ENCODE measurements at regions of chr11 and their contacts with region 1.

Region 1: GRCh38 chr11:64269380-64270234 is 14.9 kb downstream of the BAD start:
- DNase-seq: peak; percentile 100
- ATAC-seq: peak; percentile 85
- H3K4me3 ChIP-seq: peak overlapping the region; percentile 56
- H3K27ac ChIP-seq: peak overlapping the region; percentile 86
- H3K4me1 ChIP-seq: peaks cover 11% of the 10 kb centered on the region
- H3K27me3 ChIP-seq: no peaks in the 10 kb centered on the region
- CTCF ChIP-seq: peak; percentile 17; the same call in 1 of the 2 replicates
- POLR2A ChIP-seq: peak; percentile 73
- RAD21 ChIP-seq: no peak; the same call in 1 of the 2 replicates

Region 2: DNA sequence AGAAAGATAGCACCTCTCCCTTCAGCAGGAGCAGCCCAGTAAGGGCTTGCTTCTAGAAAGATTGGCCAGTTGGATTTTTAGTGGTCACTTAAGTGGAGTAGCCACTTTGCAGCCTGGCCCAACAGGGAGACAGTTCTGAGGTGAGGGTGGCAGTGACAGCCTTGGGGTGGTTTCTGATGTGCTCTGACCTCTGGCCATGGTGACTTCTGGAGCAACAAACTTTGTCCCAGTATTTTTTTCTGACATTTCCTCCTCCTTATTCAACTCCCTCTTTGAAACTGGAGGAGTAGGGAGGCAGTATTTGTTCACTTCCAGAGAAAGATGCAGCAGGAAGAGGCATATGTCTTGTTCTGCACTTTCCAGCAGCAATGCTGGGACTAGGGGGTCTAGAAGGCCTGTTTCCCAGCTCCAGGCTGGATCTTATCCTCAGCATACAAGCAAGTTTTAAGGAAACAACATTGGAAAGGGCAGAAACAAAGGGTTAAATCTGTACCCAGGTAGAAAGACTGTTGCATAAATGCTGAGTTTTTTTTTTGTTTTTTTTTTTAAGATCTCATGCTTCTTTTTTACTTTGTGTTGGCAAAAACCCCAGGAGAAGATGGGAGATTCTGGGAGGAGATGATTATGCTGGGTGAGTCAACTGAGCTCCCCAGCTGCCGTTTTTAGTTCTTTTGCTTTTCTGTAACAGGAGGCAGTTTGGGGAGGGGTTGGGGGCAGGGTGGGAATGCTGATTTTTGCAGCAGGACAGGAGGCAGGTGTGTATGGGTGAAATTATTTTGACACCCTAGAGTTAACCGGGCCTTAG is 389.8 kb before region 1 on chr11:
- CTCF ChIA-PET with region 1: no interaction called
- POLR2A ChIA-PET with region 1: interaction called, 10 read pairs
- dilution Hi-C with region 1: no loop called
- in situ Hi-C with region 1: no loop called
- intact Hi-C with region 1: no loop called
- DNase-seq: peak; percentile 82
- ATAC-seq: peak; percentile 83
- H3K4me3 ChIP-seq: no peak overlapping the region
- H3K27ac ChIP-seq: no peak overlapping the region
- H3K4me1 ChIP-seq: peaks cover 17% of the 10 kb centered on the region
- H3K27me3 ChIP-seq: no peaks in the 10 kb centered on the region
- CTCF ChIP-seq: no peak
- POLR2A ChIP-seq: no peak
- RAD21 ChIP-seq: no peak

Region 3: DNA sequence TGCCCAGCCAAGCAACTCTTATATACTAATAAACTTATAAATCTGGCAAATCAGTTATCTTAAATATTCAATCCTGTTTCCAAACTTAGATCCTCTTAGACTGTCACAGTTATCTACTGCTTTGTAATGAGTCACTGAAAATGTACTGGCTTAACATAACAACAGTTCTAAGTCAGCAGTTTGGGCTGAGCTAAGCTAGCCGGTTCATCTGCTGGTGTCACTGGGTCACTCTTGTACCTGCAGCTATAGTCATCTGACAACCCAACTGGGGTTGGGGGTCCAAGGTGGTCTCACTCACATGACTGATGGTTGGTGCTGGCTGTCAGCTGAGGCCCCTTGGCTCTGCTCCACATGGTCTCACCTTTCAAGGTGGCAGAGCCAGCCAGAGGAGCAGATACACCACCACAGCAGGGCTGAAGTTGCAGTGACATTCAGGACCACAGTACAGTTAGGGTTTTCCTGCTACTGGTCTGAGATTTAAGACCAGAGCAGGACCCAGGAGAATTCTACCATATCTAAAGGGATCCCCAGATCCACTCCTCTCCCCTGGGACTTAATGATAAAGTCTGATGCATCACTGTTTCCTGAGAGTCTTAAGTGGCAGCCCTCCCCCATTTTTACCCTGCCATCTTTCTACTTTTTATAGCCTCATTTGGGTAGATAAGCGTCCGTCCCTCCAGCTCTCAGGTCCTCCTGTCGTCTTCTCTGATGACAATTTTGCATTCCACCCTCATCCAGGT is 95.8 kb before region 1 on chr11:
- CTCF ChIA-PET with region 1: no interaction called
- POLR2A ChIA-PET with region 1: no interaction called
- dilution Hi-C with region 1: no loop called
- in situ Hi-C with region 1: no loop called
- intact Hi-C with region 1: no loop called
- DNase-seq: peak; percentile 45
- ATAC-seq: peak; percentile 49
- H3K4me3 ChIP-seq: no peak overlapping the region
- H3K27ac ChIP-seq: no peak overlapping the region
- H3K4me1 ChIP-seq: no peaks in the 10 kb centered on the region
- H3K27me3 ChIP-seq: no peaks in the 10 kb centered on the region
- CTCF ChIP-seq: no peak
- POLR2A ChIP-seq: no peak
- RAD21 ChIP-seq: no peak

Region 4: GRCh38 chr11:64230171-64230984 is 39.2 kb before region 1 on chr11 and contains the start of gene DNAJC4:
- CTCF ChIA-PET with region 1: interaction called, 4 read pairs
- POLR2A ChIA-PET with region 1: no interaction called
- dilution Hi-C with region 1: no loop called
- in situ Hi-C with region 1: no loop called
- intact Hi-C with region 1: loop called (anchors 1 kb)
- DNase-seq: peak; percentile 81
- ATAC-seq: peak; percentile 56
- H3K4me3 ChIP-seq: peak within 1 kb of the TSS; percentile 83
- H3K27ac ChIP-seq: peak within 1 kb of the TSS; percentile 51
- H3K4me1 ChIP-seq: peaks cover 20% of the 10 kb centered on the region
- H3K27me3 ChIP-seq: no peaks in the 10 kb centered on the region
- CTCF ChIP-seq: no peak
- POLR2A ChIP-seq: no peak
- RAD21 ChIP-seq: no peak
- total RNA-seq, gene DNAJC4: 2.2 and 3.9 TPM in 2 replicates

Region 5: GRCh38 chr11:64583296-64584232 is 314.0 kb after region 1 on chr11:
- CTCF ChIA-PET with region 1: no interaction called
- POLR2A ChIA-PET with region 1: no interaction called
- dilution Hi-C with region 1: no loop called
- in situ Hi-C with region 1: no loop called
- intact Hi-C with region 1: no loop called
- DNase-seq: no peak
- ATAC-seq: 0 out of 2 replicates have a peak, but pooled peaks have one; percentile 32
- H3K4me3 ChIP-seq: no peak overlapping the region
- H3K27ac ChIP-seq: no peak overlapping the region
- H3K4me1 ChIP-seq: no peaks in the 10 kb centered on the region
- H3K27me3 ChIP-seq: peaks cover 28% of the 10 kb centered on the region
- CTCF ChIP-seq: no peak
- POLR2A ChIP-seq: no peak
- RAD21 ChIP-seq: no peak

Measured in IMR-90 (cell line).